Left colon (tissue), 2 donors: ENCODE measurements at regions of chr15 and their contacts with region 1.

Region 1: GRCh38 chr15:78108299-78109084 is 16.1 kb downstream of the SH2D7 start:
- DNase-seq: peak; percentile 83 to 89
- ATAC-seq: peak; percentile 87

Region 2: DNA sequence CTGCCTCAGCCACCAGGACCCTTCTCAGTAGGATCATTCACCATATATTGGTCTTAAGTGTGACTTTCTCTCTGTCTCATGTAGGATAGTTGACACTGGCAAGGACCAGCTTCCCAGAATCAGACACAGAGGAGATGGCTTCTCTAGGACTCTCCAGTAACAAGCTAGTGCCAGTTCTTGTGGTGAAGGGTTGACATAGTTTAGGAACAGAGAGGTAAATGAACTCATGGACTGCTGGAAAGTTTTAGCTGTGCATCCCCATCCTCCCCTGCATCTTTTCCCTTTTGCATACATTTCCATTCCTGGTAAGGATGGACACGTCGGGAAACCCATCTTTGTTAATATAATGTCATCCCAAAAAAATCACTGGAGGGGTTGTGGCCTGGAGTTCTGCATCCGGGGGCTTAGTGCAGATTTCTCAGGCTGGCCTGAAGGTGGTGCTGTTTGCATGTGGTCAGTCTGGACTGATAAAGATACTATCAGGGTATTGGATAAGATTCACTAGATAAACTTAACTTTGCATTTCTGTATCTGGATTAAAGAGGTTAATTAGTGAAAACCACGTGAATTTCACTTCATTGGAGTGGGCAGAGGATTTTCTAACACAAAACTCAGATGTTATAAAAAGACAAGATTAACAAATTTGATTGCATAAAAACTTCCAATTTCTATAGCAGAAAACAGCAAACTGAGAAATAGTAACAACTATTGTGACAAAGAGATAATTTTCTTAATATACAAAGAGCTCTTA is 141.8 kb before region 1 on chr15:
- intact Hi-C with region 1: loop called in 1 of 2 experiments (anchors 5 kb)
- DNase-seq: no peak
- ATAC-seq: peak; percentile 88

Region 3: GRCh38 chr15:77983708-77984445 is 124.6 kb before region 1 on chr15:
- intact Hi-C with region 1: loop called in 1 of 2 experiments (anchors 10 kb)
- DNase-seq: no peak
- ATAC-seq: peak; percentile 12

Region 4: DNA sequence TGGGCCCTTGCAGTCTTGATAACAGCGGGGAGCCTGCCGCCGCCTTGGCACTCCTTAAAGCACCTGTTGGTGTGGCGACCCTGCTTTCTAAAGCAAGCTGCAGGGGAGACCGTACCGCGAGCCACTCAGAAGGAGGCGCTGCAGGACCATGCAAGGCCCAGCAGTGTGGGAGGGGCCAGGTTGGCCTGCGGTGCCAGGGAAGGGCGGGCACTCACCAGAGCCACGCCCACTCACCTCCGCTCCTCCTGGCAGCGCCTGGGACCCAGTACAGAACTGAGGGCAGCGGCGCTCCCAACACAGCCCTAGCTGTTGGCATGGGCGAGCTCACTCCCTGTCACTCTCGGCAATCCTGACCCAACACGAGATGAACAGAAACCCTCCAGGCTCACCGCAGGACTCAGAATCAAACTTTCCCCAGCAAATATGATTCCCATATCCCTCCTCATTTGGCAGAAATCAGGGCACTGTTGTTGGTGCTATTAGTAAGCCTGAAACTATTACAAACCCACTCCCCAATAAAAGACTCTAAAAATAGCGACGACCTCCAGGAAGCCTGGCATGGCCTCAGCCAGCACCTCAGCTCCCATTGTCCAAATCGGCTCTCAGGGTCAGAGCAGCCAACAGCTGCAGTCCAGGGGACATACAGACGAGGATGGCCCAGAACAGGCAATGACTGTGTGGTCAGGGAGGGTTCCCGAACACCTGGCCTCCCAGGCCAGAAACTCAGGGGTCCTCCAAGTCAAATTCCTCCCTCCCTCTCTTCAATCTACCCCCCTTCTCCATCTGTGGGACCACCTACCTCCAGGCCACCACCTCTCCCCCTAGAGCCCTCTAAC is 108.2 kb before region 1 on chr15:
- intact Hi-C with region 1: loop called in 1 of 2 experiments (anchors 2 kb)
- DNase-seq: peak; percentile 89 to 93
- ATAC-seq: peak; percentile 97

Region 5: GRCh38 chr15:78195735-78196201 is 87.3 kb after region 1 on chr15:
- intact Hi-C with region 1: loop called in 1 of 2 experiments (anchors 10 kb)
- DNase-seq: peak; percentile 25 to 52
- ATAC-seq: peak; percentile 96

Region 6: DNA sequence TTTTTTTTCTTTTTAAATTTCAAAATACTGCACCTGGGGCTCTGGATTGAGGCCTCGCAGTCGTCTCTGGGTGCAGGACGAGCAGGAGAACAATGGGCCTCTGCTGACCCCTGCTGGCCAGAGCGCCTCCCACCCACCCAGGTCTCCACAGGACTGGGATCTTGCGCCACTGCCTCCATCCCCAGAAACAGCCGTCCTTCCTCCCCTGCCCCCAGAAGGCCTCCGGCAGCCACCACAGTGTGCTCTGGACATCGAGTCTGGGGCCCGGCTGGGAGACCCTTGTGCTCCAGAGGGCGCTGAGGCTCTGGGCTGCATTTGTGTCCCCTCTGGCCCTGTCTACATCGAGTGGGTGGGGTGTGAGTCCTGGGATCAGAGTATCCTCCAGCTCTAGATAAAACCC is 132.5 kb after region 1 on chr15:
- intact Hi-C with region 1: loop called (anchors 5 kb)
- DNase-seq: peak; percentile 73 to 92
- ATAC-seq: peak; percentile 76